Adrenal gland (tissue), 19 donors: ENCODE measurements at regions of chr15 and their contacts with region 1.

Region 1: DNA sequence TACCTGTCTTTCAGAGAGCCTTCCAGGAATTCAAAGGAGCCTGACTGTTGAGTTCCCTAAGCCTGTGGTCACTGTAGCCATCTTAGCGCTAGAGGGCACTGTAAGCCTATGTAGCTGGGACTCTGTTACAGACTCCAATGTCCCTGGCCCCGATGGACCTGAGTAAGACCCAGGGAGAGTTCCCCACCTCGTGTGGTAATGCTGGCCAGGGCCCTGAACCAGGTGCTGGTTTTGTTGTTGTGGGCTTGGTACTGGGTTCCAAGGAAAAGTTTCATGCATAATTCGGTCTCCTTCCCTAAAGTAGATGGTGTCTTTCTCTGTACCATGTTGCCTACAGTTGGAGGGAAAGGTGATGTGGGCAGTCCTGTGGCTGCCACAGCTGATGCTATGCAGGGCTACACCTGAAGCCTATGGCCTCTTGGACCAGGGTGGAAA is 32.4 kb downstream of the CDAN1 start:
- DNase-seq: peak; percentile 69 to 89 (median 73)
- H3K4me3 ChIP-seq: no peak overlapping the region
- H3K27ac ChIP-seq: no peak overlapping the region
- H3K4me1 ChIP-seq: no peaks in the 10 kb centered on the region
- H3K27me3 ChIP-seq: no peaks in the 10 kb centered on the region
- CTCF ChIP-seq: peak; percentile 54 to 86 (median 80)
- POLR2A ChIP-seq: no peak

Region 2: DNA sequence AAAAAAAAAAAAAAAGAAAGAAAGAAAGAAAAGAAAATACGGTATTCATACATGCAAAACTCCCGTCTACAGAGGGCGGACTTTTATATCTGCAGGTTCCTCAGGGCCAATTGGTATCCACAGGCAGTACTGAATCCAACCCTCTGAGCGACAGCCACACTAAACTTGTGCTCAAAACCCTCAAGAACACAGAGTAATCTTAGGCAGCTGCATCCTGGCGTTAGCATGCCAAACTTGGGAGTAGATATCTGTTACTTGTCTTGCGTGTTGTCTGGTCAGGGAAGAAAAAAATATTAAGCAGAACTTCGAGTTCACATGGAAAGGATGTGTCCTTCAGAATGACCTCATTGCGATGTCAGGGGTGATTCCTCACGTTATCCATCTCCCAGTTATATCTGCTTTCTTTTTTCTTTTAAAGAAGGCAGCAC is 196.2 kb before region 1 on chr15:
- intact Hi-C with region 1: no loop called
- DNase-seq: peak in 6 of 7 donors; percentile 40 to 76 (median 54)
- H3K4me3 ChIP-seq: no peak overlapping the region
- H3K27ac ChIP-seq: peak overlapping the region; percentile 32 to 69 (median 58)
- H3K4me1 ChIP-seq: peaks cover 30 to 37% of the 10 kb centered on the region in 2 donors
- H3K27me3 ChIP-seq: no peaks in the 10 kb centered on the region
- CTCF ChIP-seq: peak in 3 of 6 experiments; percentile 8 to 20 (median 12)
- POLR2A ChIP-seq: peak in 1 of 2 donors; percentile 58

Region 3: GRCh38 chr15:42640103-42640502 is 64.4 kb before region 1 on chr15:
- intact Hi-C with region 1: no loop called
- DNase-seq: no peak
- H3K4me3 ChIP-seq: no peak overlapping the region
- H3K27ac ChIP-seq: no peak overlapping the region
- H3K4me1 ChIP-seq: no peaks in the 10 kb centered on the region
- H3K27me3 ChIP-seq: no peaks in the 10 kb centered on the region
- CTCF ChIP-seq: no peak
- POLR2A ChIP-seq: no peak

Region 4: GRCh38 chr15:42929306-42929848 is 224.9 kb after region 1 on chr15:
- intact Hi-C with region 1: loop called in 1 of 2 experiments (anchors 5 kb)
- DNase-seq: no peak
- H3K4me3 ChIP-seq: no peak overlapping the region
- H3K27ac ChIP-seq: no peak overlapping the region
- H3K4me1 ChIP-seq: peaks cover 0 to 3% of the 10 kb centered on the region in 2 donors
- H3K27me3 ChIP-seq: no peaks in the 10 kb centered on the region
- CTCF ChIP-seq: no peak
- POLR2A ChIP-seq: no peak